ENCODE measurements at regions of chr4 and their contacts with region 1.

Region 1: GRCh38 chr4:64533637-64534036 is 124.4 kb upstream of the TECRL start:
- DNase-seq: no peak
- ATAC-seq: peak; percentile 52

Region 2: GRCh38 chr4:64399313-64400109 is 134.1 kb before region 1 on chr4:
- intact Hi-C with region 1: loop called (anchors 5 kb)
- DNase-seq: no peak
- ATAC-seq: peak; percentile 17

Region 3: DNA sequence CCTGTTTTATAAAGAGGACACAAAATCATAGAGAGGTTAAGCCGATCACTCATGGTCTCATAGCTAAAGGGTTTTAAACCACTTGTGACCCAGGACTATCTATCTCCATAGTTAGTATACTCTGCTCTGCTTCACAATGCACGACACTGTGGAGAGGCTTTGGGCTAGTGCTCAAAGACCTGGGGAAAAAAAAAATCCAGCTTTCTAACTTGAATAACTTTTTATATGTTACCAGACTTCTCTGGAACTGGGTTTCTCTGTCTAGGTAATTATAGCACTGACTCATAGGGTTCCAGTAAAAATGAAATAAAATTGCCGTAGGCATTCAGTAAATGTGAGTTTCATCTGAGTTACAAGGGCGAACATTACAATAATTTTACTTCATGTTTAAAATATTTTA is 149.3 kb after region 1 on chr4:
- intact Hi-C with region 1: no loop called
- DNase-seq: no peak
- ATAC-seq: no peak

Region 4: DNA sequence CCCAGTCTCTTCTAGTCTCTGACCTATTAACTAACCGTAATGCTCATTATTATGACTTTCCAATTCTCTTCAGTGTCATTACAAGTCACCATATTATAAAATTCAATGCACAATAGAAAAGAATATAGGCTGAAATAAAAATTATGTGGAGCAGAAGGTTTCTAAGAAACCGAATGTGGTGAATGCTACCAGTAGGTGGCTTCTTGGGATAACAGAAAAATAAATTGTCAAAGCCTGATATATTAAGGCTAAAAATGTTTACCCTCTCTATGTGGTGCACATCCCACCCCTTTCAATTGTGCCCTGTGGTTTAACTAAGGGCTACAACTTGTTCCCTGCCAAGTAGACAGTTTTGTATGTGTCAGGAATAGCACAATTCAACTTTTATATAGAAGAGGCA is 500.3 kb after region 1 on chr4:
- intact Hi-C with region 1: no loop called
- DNase-seq: no peak
- ATAC-seq: no peak